ENCODE measurements at regions of chr4 and their contacts with region 1.

Region 1: DNA sequence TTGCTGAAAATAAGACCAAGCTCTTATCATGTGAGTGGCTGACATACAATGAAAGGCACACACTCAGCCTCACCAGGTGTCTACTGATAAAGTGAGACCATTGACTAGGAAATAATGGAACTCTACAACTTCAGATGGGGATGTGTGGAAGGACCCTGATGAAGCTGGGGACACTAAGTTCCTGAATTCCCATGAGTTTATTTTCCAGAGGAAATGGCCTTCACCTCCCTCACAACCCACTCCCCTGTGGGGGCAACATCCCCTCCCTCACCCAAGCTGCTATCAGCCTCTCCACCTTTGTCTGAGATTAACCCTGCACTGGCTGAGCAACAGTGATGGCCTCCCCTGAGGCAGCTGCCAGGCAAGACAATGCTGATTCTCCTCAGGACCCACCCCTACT is 55.2 kb upstream of the SMARCAD1 start:
- DNase-seq: no peak
- H3K4me3 ChIP-seq: no peak overlapping the region
- H3K27ac ChIP-seq: no peak overlapping the region
- H3K4me1 ChIP-seq: no peaks in the 10 kb centered on the region
- H3K27me3 ChIP-seq: no peaks in the 10 kb centered on the region
- CTCF ChIP-seq: no peak
- POLR2A ChIP-seq: no peak

Region 2: GRCh38 chr4:93451954-93452353 is 700.5 kb before region 1 on chr4:
- intact Hi-C with region 1: loop called (anchors 10 kb)
- DNase-seq: no peak
- H3K4me3 ChIP-seq: no peak overlapping the region
- H3K27ac ChIP-seq: no peak overlapping the region
- H3K4me1 ChIP-seq: no peaks in the 10 kb centered on the region
- H3K27me3 ChIP-seq: no peaks in the 10 kb centered on the region
- CTCF ChIP-seq: no peak
- POLR2A ChIP-seq: no peak

Region 3: DNA sequence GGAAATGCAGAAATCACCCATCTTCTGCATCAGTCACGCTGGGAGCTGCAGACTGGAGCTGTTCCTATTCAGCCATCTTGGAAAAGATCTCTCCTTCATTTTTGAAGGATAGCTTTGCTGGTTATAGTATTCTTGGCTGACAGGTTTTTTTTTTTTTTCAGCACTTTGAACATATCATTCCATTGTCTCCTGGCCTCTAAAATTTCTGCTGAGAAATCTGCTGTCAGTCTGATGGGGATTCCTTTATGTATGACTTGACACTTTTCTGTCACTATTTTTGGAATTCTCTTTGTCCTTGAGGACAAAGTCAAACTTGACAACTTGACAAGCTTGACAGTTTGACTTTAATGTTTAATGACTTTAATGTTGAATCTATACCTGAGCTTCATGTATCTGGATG is 173.4 kb after region 1 on chr4:
- intact Hi-C with region 1: no loop called
- DNase-seq: no peak
- H3K4me3 ChIP-seq: no peak overlapping the region
- H3K27ac ChIP-seq: no peak overlapping the region
- H3K4me1 ChIP-seq: no peaks in the 10 kb centered on the region
- H3K27me3 ChIP-seq: no peaks in the 10 kb centered on the region
- CTCF ChIP-seq: no peak
- POLR2A ChIP-seq: no peak